ENCODE measurements at regions of chr19 and their contacts with region 1.

Region 1: GRCh38 chr19:58519355-58520256 is at the start of gene ZBTB45:
- DNase-seq: peak; percentile 94
- ATAC-seq: peak; percentile 74
- H3K4me3 ChIP-seq: peak within 1 kb of the TSS; percentile 78 to 90
- H3K27ac ChIP-seq: peak within 1 kb of the TSS; percentile 91
- H3K4me1 ChIP-seq: peaks cover 12 to 35% of the 10 kb centered on the region in 2 experiments
- H3K27me3 ChIP-seq: no peaks in the 10 kb centered on the region
- CTCF ChIP-seq: peak; percentile 69 to 75 (median 71)
- POLR2A ChIP-seq: peak; percentile 68
- RAD21 ChIP-seq: peak; percentile 90
- total RNA-seq, gene ZBTB45: 12.0 TPM

Region 2: DNA sequence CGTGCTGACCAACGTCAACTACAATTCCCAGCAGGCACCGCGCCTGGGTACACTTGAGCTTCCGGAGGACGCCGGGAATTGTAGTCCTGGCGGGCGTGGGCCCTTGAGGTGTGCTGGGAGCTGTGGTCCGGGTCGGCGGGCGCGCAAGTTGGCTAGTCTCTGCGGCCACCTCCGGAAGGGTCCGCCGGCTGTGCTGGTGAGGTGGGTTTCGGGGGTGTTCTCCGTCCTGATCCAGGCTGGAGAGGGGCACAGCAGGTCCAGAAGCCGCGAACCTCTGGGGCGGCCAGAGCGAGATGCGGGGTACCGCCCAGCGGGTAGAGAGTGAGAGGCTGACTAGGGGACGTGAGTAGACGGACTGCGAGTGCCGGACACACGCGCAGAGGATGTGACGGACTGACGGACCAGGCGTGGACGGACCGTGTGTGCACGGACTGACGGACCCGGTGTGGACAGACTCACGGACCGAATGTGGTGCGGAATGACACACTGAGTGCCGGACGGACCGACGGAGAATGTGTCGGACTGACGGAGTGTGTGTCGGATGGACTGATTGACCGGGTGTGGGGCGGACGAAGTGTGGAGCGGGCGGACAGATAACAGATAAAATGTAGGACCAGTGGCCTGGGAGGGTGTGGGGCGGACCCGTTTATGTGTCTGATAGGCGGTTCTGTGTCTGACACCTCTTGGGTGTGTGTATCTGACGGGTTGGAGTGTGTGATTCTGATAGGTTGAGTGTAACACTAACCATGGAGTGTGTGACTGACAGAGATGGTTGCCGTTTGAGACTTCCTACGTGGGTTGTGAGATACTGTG is 192.5 kb before region 1 on chr19 and contains the start of gene ZSCAN22:
- CTCF ChIA-PET with region 1: interaction called, 10 read pairs
- POLR2A ChIA-PET with region 1: no interaction called
- RAD21 ChIA-PET with region 1: no interaction called
- intact Hi-C with region 1: loop called (anchors 5 kb)
- DNase-seq: peak; percentile 94
- ATAC-seq: peak; percentile 93
- H3K4me3 ChIP-seq: peak within 1 kb of the TSS; percentile 78 to 91
- H3K27ac ChIP-seq: peak within 1 kb of the TSS; percentile 71
- H3K4me1 ChIP-seq: peaks cover 10 to 24% of the 10 kb centered on the region in 2 experiments
- H3K27me3 ChIP-seq: no peaks in the 10 kb centered on the region
- CTCF ChIP-seq: no peak
- POLR2A ChIP-seq: peak; percentile 85
- RAD21 ChIP-seq: no peak; the same call in 1 of the 2 replicates
- total RNA-seq, gene ZSCAN22: 4.6 TPM

Region 3: DNA sequence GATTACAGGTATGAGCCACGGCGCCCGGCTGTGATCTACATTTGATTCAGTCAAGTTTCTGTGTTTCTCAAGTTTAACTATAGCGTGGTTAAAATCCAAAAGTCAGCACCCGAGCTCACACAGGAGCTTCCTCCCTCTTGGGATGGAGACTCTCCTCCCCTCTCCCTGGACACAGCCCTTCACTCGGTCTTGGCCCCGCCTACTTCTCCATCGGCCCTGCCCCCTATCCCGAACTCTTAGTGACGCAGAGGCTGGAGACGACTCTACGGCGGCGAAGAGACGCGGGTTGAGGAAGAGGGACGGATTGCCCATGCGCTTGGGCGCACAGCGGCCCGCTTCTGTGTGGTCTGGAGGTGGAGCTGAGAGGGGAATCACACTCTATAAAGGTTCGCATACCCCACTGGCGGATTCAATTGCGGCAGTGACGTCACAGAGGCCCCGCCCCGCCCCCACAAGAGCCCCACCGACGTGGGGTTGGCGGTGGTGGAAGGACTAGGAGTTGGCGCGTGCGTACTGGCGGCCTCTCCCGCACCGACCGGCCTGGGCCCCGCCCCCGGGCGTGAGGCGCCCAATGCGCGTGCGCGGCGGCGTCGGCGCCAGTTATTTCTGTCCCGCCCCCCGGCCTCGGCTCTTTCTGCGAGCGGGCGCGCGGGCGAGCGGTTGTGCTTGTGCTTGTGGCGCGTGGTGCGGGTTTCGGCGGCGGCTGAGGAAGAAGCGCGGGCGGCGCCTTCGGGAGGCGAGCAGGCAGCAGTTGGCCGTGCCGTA is 24.4 kb after region 1 on chr19 and contains the start of gene TRIM28:
- CTCF ChIA-PET with region 1: interaction called, 9 read pairs
- POLR2A ChIA-PET with region 1: interaction called, 31 read pairs
- RAD21 ChIA-PET with region 1: no interaction called
- intact Hi-C with region 1: loop called (anchors 1 kb)
- DNase-seq: peak; percentile 96
- ATAC-seq: peak; percentile 92
- H3K4me3 ChIP-seq: peak within 1 kb of the TSS; percentile 90 to 94
- H3K27ac ChIP-seq: peak within 1 kb of the TSS; percentile 77
- H3K4me1 ChIP-seq: peaks cover 14 to 27% of the 10 kb centered on the region in 2 experiments
- H3K27me3 ChIP-seq: peaks cover 10% of the 10 kb centered on the region; the same call in 1 of the 2 replicates
- CTCF ChIP-seq: no peak
- POLR2A ChIP-seq: peak; percentile 88
- RAD21 ChIP-seq: no peak
- total RNA-seq, gene TRIM28: 908 TPM

Region 4: GRCh38 chr19:58572818-58573657 is 53.4 kb after region 1 on chr19 and contains the start of gene MZF1:
- CTCF ChIA-PET with region 1: interaction called, 7 read pairs
- POLR2A ChIA-PET with region 1: interaction called, 9 read pairs
- RAD21 ChIA-PET with region 1: interaction called in 1 of 2 experiments, 8 read pairs
- intact Hi-C with region 1: loop called (anchors 2 kb)
- DNase-seq: peak; percentile 100
- ATAC-seq: peak; percentile 70
- H3K4me3 ChIP-seq: peak within 1 kb of the TSS; percentile 78 to 86
- H3K27ac ChIP-seq: peak within 1 kb of the TSS; percentile 91
- H3K4me1 ChIP-seq: peaks cover 12 to 28% of the 10 kb centered on the region in 2 experiments
- H3K27me3 ChIP-seq: no peaks in the 10 kb centered on the region
- CTCF ChIP-seq: no peak
- POLR2A ChIP-seq: no peak
- RAD21 ChIP-seq: no peak
- total RNA-seq, gene MZF1: 33.0 TPM

Measured in HCT116 (cell line).